ENCODE measurements at regions of chr3 and their contacts with region 1.

Region 1: GRCh38 chr3:172836390-172836997 is 86.0 kb downstream of the ECT2 start:
- DNase-seq: peak; percentile 78
- H3K4me3 ChIP-seq: no peak overlapping the region
- H3K27ac ChIP-seq: no peak overlapping the region
- H3K4me1 ChIP-seq: peaks cover 13% of the 10 kb centered on the region
- H3K27me3 ChIP-seq: no peaks in the 10 kb centered on the region
- CTCF ChIP-seq: peak; percentile 84

Region 2: DNA sequence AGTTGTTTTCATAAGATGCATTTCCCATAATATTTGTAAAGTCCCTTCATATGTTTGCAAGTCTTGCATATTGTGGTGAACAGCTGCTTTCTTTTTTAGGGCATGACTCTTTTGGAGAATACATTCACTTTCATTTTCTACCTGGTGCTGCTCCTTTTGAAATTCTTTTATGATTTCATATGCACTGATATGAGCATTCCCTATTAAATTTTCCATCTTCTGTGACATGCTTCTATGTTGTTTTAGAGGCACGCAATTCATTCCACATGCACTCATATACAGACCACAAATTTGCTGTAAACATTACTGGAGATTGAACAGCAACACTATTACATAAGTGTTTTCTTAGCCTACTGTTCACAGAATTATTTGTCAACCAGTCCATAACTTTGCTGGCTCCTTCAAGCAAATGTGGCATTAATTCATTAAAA is 220.4 kb before region 1 on chr3:
- CTCF ChIA-PET with region 1: no interaction called
- POLR2A ChIA-PET with region 1: no interaction called
- intact Hi-C with region 1: no loop called
- DNase-seq: no peak
- H3K4me3 ChIP-seq: no peak overlapping the region
- H3K27ac ChIP-seq: no peak overlapping the region
- H3K4me1 ChIP-seq: no peaks in the 10 kb centered on the region
- H3K27me3 ChIP-seq: no peaks in the 10 kb centered on the region
- CTCF ChIP-seq: no peak

Region 3: DNA sequence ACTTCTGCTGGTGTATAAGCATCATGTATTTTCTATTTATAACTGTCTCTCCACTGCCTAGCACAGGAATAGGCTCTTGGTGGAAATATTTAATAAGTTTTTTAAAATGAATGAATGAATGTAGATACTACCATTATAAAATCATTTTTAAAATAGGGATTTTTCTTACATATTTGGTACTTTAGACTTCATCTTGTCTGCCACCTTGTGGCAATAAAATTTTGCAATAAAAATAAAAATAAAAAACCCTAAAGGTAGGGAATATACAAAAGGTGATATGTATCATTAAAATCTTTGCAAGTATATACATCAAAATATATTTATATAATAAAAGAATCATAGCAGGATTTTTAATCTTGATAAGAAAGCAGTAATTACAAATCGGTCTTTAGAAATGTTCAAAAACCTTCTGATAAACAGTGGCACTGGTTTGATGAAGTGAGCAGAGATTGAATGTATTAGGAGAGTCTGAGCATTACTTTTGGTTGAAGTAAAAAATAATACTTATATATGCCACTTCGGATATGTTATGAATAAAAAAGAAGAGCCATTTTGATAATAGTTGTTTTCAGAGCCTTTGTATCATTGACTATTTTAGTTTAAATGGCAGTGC is 209.4 kb after region 1 on chr3:
- CTCF ChIA-PET with region 1: no interaction called
- POLR2A ChIA-PET with region 1: no interaction called
- intact Hi-C with region 1: loop called (anchors 1 kb)
- DNase-seq: no peak
- H3K4me3 ChIP-seq: no peak overlapping the region
- H3K27ac ChIP-seq: no peak overlapping the region
- H3K4me1 ChIP-seq: peaks cover 8% of the 10 kb centered on the region
- H3K27me3 ChIP-seq: no peaks in the 10 kb centered on the region
- CTCF ChIP-seq: no peak; the same call in none of the 2 replicates

Region 4: DNA sequence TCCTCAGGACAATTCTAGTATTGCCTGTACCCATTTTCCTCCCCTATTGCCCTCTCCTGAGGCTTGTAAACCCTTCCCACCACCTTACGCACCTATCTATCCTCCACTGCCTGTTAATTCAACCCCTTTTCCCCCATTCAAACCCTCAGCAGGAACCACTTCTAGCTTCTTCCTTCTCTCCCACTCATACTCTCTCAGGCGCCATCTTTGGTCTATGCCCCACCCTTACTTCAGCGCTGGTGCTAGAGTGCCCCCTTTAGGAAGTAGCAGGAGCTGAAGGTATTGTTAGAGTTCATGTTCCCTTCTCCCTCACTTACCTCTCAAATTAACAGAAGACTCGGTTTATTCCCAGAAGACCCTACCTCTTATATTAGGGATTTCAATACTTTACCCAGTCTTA is 439.2 kb after region 1 on chr3:
- CTCF ChIA-PET with region 1: no interaction called
- POLR2A ChIA-PET with region 1: no interaction called
- intact Hi-C with region 1: loop called (anchors 10 kb)
- DNase-seq: peak; percentile 59
- H3K4me3 ChIP-seq: no peak overlapping the region
- H3K27ac ChIP-seq: no peak overlapping the region
- H3K4me1 ChIP-seq: no peaks in the 10 kb centered on the region
- H3K27me3 ChIP-seq: no peaks in the 10 kb centered on the region
- CTCF ChIP-seq: peak; percentile 56

Measured in A673 (cell line).